Activated T-helper 2 cell treated with anti-CD3 and anti-CD28 coated beads, Interferon-gamma antibody, Interleukin-2, Interleukin-4, amounts not matched to agents 10 μg/mL and 5 μg/mL and 100 μg/mL, durations not matched to agents 14 hours and 24 hours and 36 hours (primary cell): ENCODE measurements at regions of chr12 and their contacts with region 1.

Region 1: GRCh38 chr12:2583091-2583497 is 211.7 kb upstream of the FKBP4 start:
- DNase-seq: peak; percentile 50
- H3K4me3 Mint-ChIP-seq: no peak overlapping the region
- H3K27ac Mint-ChIP-seq: no peak overlapping the region
- H3K4me1 Mint-ChIP-seq: peaks cover 3% of the 10 kb centered on the region
- H3K27me3 Mint-ChIP-seq: peaks cover 27% of the 10 kb centered on the region

Region 2: DNA sequence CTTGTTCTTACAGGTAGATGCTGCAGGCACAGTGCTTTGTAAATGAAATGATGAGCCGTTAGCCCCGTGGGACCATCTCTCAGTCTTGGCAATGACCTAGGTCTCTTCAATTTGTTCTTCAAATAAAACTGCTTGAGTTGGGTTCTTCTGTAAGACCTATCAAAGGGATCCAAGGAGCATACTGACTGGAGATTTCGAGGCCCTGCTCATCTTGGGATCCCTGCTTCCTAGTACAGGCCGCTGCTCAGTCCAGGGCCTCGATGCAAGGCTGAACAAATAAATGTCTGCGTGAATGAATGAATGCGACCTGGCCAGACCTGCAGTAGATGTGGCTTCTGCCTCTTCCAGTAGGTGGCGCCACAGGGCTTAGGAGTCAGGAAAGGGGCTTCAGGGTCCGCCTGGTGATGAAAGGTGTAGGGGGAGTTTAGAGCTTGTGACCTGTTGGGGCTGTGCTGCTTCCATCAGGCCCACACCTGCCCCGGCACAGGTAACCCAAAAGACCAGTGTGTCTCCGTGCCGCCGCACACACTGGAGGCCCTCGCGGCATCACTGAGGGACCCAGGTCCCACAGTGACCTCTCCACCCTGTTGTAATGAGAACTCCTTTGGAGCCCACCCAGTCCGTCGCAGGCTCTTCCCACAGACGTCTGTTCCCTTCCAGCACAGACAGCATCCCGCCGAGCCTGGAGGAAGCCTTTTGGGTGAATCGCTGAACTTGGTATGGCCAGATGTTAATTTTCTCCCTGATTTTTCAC is 525.9 kb before region 1 on chr12:
- intact Hi-C with region 1: loop called (anchors 10 kb)
- DNase-seq: peak; percentile 27
- H3K4me3 Mint-ChIP-seq: no peak overlapping the region
- H3K27ac Mint-ChIP-seq: no peak overlapping the region
- H3K4me1 Mint-ChIP-seq: peaks cover 8% of the 10 kb centered on the region
- H3K27me3 Mint-ChIP-seq: peaks cover 56% of the 10 kb centered on the region

Region 3: DNA sequence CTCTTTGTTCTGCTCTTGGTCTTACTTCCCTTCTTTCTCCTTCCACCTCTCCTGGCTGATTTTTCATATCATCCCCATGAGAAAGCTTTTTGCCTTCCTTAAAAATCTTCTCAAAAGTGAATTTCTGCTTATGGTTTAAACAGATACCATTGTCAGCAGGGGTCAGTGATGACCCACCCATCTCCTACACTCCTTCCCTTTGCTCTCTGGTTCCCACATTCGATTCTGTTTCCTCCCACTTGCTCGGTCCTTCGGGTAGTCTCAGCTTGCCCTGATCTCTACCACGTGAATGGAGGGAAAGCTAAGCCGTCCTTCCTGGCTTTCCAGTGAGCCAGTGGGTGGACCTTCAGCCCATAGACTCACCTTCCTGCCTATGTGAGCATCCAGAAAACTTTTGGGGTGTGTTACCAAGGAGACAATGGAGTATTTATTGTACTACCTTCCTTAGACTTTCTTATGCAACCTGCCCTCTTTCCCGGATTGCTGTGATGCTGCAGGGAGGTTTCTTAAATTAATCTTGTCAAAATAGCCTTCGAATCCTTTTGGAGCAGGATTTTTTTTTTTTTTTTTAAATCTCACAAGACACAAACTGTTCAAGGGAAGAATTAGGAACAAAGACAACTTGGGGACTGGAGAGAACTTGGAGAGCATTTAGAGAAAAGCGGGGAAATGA is 224.0 kb before region 1 on chr12:
- intact Hi-C with region 1: loop called (anchors 5 kb)
- DNase-seq: no peak
- H3K4me3 Mint-ChIP-seq: no peak overlapping the region
- H3K27ac Mint-ChIP-seq: peak overlapping the region; percentile 52
- H3K4me1 Mint-ChIP-seq: peaks cover 34% of the 10 kb centered on the region
- H3K27me3 Mint-ChIP-seq: peaks cover 18% of the 10 kb centered on the region

Region 4: DNA sequence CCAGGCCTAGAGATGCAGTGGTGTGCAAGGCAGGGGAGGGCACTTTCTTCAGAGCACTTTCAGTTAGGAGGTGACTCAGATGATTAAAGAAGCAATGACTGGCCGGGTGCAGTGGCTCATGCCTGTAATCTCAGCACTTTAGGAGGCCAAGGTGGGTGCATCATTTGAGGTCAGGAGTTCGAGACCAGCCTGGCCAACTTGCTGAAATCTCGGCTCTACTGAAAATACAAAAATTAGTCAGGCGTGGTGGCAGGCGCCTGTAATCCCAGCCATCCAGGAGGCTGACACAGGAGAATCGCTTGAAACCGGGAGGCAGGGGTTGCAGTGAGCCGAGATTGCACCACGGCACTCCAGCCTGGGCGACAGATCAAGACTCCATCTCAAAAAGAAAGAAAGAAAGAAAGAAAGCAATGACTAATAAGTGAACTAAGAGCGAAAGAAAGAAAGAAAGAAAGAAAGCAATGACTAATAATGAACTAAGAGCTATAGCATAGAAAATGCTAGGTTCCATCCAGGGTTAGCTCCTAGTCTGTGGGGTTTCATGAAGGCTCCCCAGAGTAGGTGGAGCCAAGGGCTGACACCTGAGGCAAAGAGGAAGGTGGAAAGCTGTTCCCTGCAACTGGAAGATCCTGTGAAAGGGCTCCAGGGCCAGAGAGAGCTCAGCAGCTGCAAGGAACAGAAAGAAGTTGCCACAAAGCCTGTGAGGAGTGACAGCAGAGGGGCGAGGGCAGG is 195.8 kb before region 1 on chr12:
- intact Hi-C with region 1: loop called (anchors 10 kb)
- DNase-seq: no peak
- H3K4me3 Mint-ChIP-seq: no peak overlapping the region
- H3K27ac Mint-ChIP-seq: no peak overlapping the region
- H3K4me1 Mint-ChIP-seq: no peaks in the 10 kb centered on the region
- H3K27me3 Mint-ChIP-seq: peaks cover 14% of the 10 kb centered on the region

Region 5: GRCh38 chr12:2640705-2641104 is 57.6 kb after region 1 on chr12:
- intact Hi-C with region 1: no loop called
- DNase-seq: no peak
- H3K4me3 Mint-ChIP-seq: no peak overlapping the region
- H3K27ac Mint-ChIP-seq: no peak overlapping the region
- H3K4me1 Mint-ChIP-seq: peaks cover 12% of the 10 kb centered on the region
- H3K27me3 Mint-ChIP-seq: peaks cover 21% of the 10 kb centered on the region